ENCODE measurements at regions of chr22 and their contacts with region 1.

Region 1: DNA sequence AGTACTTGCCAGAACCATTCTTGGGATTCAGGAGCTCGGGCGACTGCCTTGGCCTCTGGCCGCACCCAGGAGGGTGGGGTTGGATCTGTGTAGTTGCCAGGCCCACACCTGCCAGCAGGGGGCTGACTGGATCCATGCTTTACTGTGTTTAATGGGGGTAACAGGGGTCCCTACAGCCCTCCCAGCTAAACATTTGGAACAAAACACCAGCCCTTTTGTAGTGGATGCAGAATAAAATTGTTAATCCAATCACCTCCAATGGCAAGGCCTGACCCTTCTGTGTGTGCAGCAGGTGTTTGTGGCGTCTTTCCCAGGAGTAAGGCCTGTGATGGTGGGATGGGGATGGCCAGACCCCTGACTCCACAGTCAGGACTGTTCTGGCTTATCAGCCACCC is 22.5 kb downstream of the SUN2 start:
- DNase-seq: peak in 7 of 9 experiments; percentile 56 to 84 (median 67)
- ATAC-seq: peak; percentile 64
- H3K4me3 ChIP-seq: no peak overlapping the region
- H3K4me3 Mint-ChIP-seq: no peak overlapping the region
- H3K27ac ChIP-seq: peak overlapping the region in 1 of 2 experiments; percentile 40
- H3K27ac Mint-ChIP-seq: peak overlapping the region; percentile 75
- H3K4me1 ChIP-seq: peaks cover 49% of the 10 kb centered on the region
- H3K4me1 Mint-ChIP-seq: peaks cover 56% of the 10 kb centered on the region
- H3K27me3 ChIP-seq: no peaks in the 10 kb centered on the region
- H3K27me3 Mint-ChIP-seq: no peaks in the 10 kb centered on the region
- CTCF ChIP-seq: peak; percentile 83

Region 2: DNA sequence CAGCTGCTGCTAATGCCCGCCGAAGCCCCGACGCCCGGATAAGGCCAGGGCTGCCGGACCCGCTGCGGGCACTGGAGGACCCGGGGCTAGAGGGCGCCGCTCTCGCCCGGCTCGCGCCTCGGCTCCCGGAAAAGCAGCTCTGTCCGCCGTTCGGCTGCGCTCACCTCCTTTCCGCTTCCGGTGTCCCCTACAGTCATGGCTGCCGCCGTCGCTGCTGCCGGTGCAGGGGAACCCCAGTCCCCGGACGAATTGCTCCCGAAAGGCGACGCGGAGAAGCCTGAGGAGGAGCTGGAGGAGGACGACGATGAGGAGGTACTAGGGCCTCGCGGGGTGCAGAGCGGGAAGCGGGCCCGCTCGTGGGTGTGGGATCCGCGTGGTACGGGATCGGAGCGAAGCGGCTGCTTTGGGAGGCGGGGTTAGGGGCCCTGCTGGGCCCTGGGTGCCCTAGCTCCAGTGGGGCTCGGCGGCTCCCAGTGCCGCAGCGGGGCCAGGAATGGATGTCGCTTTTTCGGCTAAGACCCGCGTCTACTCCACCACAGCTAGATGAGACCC is 51.5 kb before region 1 on chr22 and contains the start of gene TOMM22:
- CTCF ChIA-PET with region 1: no interaction called
- POLR2A ChIA-PET with region 1: interaction called, 12 read pairs
- intact Hi-C with region 1: no loop called
- DNase-seq: peak; percentile 60 to 92 (median 84)
- ATAC-seq: peak; percentile 92
- H3K4me3 ChIP-seq: peak within 1 kb of the TSS; percentile 92 to 95
- H3K4me3 Mint-ChIP-seq: peak within 1 kb of the TSS; percentile 99
- H3K27ac ChIP-seq: peak within 1 kb of the TSS; percentile 84 to 87
- H3K27ac Mint-ChIP-seq: peak within 1 kb of the TSS; percentile 99
- H3K4me1 ChIP-seq: peaks cover 13% of the 10 kb centered on the region
- H3K4me1 Mint-ChIP-seq: peaks cover 19% of the 10 kb centered on the region
- H3K27me3 ChIP-seq: no peaks in the 10 kb centered on the region
- H3K27me3 Mint-ChIP-seq: no peaks in the 10 kb centered on the region
- CTCF ChIP-seq: peak; percentile 37
- total RNA-seq, gene TOMM22: 75.2 to 75.4 TPM

Region 3: GRCh38 chr22:38718414-38718813 is 14.9 kb before region 1 on chr22:
- CTCF ChIA-PET with region 1: interaction called, 38 read pairs
- POLR2A ChIA-PET with region 1: interaction called, 53 read pairs
- intact Hi-C with region 1: no loop called
- DNase-seq: no peak
- ATAC-seq: no peak
- H3K4me3 ChIP-seq: no peak overlapping the region
- H3K4me3 Mint-ChIP-seq: no peak overlapping the region
- H3K27ac ChIP-seq: no peak overlapping the region
- H3K27ac Mint-ChIP-seq: no peak overlapping the region
- H3K4me1 ChIP-seq: no peaks in the 10 kb centered on the region
- H3K4me1 Mint-ChIP-seq: peaks cover 21% of the 10 kb centered on the region
- H3K27me3 ChIP-seq: no peaks in the 10 kb centered on the region
- H3K27me3 Mint-ChIP-seq: no peaks in the 10 kb centered on the region
- CTCF ChIP-seq: no peak

Region 4: DNA sequence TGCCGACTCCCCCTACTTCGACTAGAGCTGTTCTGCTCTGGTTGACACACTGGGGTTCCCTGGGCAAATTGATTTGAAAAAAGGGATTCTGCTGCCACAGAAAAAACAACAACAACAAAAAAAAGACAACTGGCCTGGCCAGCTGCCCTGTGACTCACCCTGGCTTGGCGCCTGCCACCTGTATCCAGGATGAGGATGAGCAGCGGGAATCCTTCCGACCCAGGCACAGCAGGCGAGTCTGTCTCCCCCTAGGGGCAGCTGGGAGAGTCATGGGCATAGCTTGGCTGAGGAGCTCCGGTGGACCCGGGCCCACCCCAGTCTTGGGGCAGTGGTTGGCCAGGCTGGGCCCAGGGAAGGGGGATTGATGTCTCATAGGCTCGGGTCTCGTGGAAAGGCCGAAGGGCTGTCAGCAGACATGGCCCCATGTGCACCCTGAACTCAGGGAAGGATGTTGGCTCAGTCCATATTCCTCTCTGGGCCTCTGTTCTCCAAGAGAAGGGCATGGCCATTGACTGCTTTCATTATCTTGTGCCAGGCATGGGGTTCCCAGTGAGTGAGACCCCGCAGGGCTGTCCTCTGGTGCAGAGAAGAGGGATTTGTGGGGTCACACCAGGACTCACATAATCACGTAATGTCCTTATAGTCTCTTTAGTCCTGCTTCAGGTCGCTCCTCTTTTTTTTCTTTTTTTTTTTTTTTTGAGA is 32.9 kb after region 1 on chr22:
- CTCF ChIA-PET with region 1: interaction called, 125 read pairs
- POLR2A ChIA-PET with region 1: interaction called, 60 read pairs
- intact Hi-C with region 1: loop called (anchors 1 kb)
- DNase-seq: peak in 7 of 9 experiments; percentile 34 to 74 (median 55)
- ATAC-seq: peak; percentile 63
- H3K4me3 ChIP-seq: no peak overlapping the region
- H3K4me3 Mint-ChIP-seq: no peak overlapping the region
- H3K27ac ChIP-seq: no peak overlapping the region
- H3K27ac Mint-ChIP-seq: no peak overlapping the region
- H3K4me1 ChIP-seq: peaks cover 6% of the 10 kb centered on the region
- H3K4me1 Mint-ChIP-seq: peaks cover 11% of the 10 kb centered on the region
- H3K27me3 ChIP-seq: no peaks in the 10 kb centered on the region
- H3K27me3 Mint-ChIP-seq: no peaks in the 10 kb centered on the region
- CTCF ChIP-seq: peak; percentile 54

Region 5: DNA sequence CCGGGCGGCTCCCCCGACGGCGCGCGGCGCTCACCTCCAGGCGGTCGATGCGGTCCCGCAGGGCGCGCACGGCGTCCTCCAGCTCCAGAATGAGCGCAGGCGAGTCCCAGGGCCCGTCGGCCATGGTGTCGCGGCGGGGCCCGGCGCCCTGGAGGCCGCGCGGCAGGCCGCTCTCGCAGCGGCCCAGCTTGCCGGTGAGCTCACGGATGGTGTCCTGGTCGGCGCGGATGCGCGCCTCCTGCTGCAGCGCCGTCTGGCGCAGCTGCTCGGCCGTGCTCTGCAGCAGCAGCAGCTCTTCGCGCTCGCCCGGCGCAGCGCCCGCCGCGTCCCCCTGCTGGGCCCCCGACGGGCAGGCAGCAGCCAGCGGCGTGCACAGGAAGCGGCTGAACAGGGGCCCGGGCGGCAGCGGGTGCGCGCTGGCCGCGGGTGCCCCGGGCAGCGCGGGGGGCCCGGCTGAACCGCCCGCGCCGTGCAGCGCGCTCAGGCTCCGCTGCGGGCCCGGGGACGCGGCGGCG is 109.9 kb after region 1 on chr22:
- CTCF ChIA-PET with region 1: interaction called, 9 read pairs
- POLR2A ChIA-PET with region 1: interaction called, 37 read pairs
- intact Hi-C with region 1: loop called (anchors 1 to 2 kb)
- DNase-seq: peak; percentile 19 to 85 (median 54)
- ATAC-seq: peak; percentile 85
- H3K4me3 ChIP-seq: peak overlapping the region in 1 of 2 experiments; percentile 50
- H3K4me3 Mint-ChIP-seq: peak overlapping the region; percentile 29
- H3K27ac ChIP-seq: no peak overlapping the region
- H3K27ac Mint-ChIP-seq: no peak overlapping the region
- H3K4me1 ChIP-seq: peaks cover 19% of the 10 kb centered on the region
- H3K4me1 Mint-ChIP-seq: peaks cover 26% of the 10 kb centered on the region
- H3K27me3 ChIP-seq: no peaks in the 10 kb centered on the region
- H3K27me3 Mint-ChIP-seq: peaks cover 14% of the 10 kb centered on the region
- CTCF ChIP-seq: no peak